Activated T-helper 1 cell treated with anti-CD3 and anti-CD28 coated beads, Interleukin-12 subunit alpha, Interleukin-12 subunit beta, Interleukin-2, Interleukin-4 antibody, amounts not matched to agents 30 ng/mL and 10 ng/mL and 1 ng/mL, durations not matched to agents 14 hours and 24 hours and 36 hours (primary cell): ENCODE measurements at regions of chr4 and their contacts with region 1.

Region 1: GRCh38 chr4:88823058-88823919 is 125.7 kb upstream of the NAP1L5 start:
- DNase-seq: peak; percentile 76
- H3K4me3 Mint-ChIP-seq: peak overlapping the region; percentile 95
- H3K27ac Mint-ChIP-seq: peak overlapping the region; percentile 99
- H3K4me1 Mint-ChIP-seq: peaks cover 48% of the 10 kb centered on the region
- H3K27me3 Mint-ChIP-seq: no peaks in the 10 kb centered on the region

Region 2: DNA sequence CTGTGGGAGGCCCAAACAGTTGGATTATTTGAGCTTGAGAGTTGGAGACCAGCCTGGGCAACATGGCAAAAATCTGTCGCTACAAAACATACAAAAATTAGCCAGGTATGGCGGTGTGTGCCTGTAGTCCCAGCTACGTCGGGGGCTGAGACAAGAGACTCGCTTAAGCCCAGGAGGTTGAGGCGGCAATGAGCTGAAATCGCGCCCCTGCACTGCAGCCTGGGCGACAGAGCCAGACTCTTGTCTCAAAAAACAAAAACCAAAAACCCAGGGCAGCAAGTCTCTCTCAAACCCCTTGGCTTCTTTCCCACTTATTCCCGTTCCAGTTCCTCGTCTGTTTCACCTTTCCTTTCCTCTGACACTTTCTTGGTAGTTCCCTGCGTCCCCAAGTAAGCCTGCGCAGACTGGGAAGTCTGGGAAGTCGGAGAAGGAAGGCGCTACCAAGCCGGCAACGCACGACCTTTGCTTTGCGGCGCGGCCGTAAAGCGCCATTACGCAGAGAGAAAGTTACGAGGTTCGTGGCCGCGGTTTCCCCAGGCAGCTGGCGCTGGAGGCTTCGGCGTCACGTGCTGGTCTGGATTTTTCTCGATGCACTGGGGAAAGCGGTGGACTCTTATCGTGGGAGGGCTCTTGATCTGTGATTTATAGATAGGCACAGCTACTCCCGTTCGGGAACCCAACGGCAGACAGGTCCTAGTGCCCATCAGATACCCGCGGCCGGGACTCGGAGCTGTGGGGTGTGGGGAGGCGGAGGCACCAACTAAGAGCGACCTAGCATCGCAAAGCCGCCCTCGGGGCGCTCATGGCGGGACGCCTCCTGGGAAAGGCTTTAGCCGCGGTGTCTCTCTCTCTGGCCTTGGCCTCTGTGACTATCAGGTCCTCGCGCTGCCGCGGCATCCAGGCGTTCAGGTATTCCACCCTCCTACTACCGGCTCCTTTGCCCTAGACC is 1400.9 kb before region 1 on chr4 and contains the start of gene NUDT9:
- intact Hi-C with region 1: loop called (anchors 5 kb)
- DNase-seq: peak; percentile 79
- H3K4me3 Mint-ChIP-seq: peak within 1 kb of the TSS; percentile 99
- H3K27ac Mint-ChIP-seq: peak within 1 kb of the TSS; percentile 95
- H3K4me1 Mint-ChIP-seq: peaks cover 30% of the 10 kb centered on the region
- H3K27me3 Mint-ChIP-seq: peaks cover 5% of the 10 kb centered on the region
- total RNA-seq, gene NUDT9: 13.9 and 14.6 TPM in 2 replicates

Region 3: DNA sequence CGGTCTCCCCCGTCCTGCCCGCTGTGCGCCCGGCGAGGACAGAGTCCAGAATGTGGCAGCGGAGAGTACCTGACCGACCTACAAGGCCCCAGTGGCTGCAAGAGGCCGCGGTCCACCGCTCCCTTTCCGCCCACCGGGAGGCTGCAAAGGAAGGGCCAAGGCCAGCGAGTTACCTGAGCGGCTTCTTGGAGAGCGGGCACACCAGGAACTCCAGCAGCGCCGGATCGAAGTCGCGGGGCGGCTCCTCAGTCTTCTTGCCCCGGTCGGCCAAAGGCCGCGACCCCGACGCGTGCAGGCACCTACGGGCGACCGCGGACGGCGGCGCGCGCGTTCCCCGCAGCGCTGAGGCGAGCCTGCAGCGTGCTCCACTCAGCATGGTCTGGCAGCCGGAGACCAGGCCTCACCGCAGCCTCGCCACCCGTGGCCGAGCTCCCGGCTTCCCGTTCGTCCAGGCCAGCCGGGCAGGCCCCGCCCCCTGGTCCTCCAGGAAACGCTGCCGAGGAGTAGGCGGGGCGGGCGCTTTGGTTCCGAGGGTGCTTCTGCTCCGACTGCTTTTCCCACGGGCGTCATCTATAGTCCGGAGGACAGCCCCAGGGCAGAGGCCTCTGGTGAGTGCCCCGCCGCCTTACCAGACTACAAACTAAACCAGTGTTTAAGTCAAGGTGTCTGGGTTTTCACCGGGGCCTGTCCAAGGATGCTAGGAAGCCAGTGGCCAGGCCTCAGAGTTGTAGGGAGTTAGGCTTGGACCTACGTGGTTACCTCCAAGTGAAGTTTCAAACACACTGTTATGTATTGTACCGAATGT is 299.8 kb before region 1 on chr4 and contains the start of gene PYURF:
- intact Hi-C with region 1: loop called (anchors 2 kb)
- DNase-seq: peak; percentile 79
- H3K4me3 Mint-ChIP-seq: peak within 1 kb of the TSS; percentile 99
- H3K27ac Mint-ChIP-seq: peak within 1 kb of the TSS; percentile 97
- H3K4me1 Mint-ChIP-seq: peaks cover 60% of the 10 kb centered on the region
- H3K27me3 Mint-ChIP-seq: peaks cover 2% of the 10 kb centered on the region
- total RNA-seq, gene PYURF: 55.9 and 61.5 TPM in 2 replicates

Region 4: GRCh38 chr4:88697588-88698329 is 125.5 kb before region 1 on chr4 and contains the start of gene NAP1L5:
- intact Hi-C with region 1: loop called (anchors 1 kb)
- DNase-seq: peak; percentile 61
- H3K4me3 Mint-ChIP-seq: peak within 1 kb of the TSS; percentile 88
- H3K27ac Mint-ChIP-seq: peak within 1 kb of the TSS; percentile 83
- H3K4me1 Mint-ChIP-seq: no peaks in the 10 kb centered on the region
- H3K27me3 Mint-ChIP-seq: peaks cover 2% of the 10 kb centered on the region
- total RNA-seq, gene NAP1L5: 5.5 and 6.1 TPM in 2 replicates

Region 5: GRCh38 chr4:88812420-88812819 is 10.9 kb before region 1 on chr4:
- intact Hi-C with region 1: no loop called
- DNase-seq: no peak
- H3K4me3 Mint-ChIP-seq: no peak overlapping the region
- H3K27ac Mint-ChIP-seq: no peak overlapping the region
- H3K4me1 Mint-ChIP-seq: peaks cover under 1% of the 10 kb centered on the region
- H3K27me3 Mint-ChIP-seq: peaks cover 21% of the 10 kb centered on the region

Region 6: GRCh38 chr4:88964450-88964849 is 141.2 kb after region 1 on chr4:
- intact Hi-C with region 1: loop called (anchors 5 kb)
- DNase-seq: no peak
- H3K4me3 Mint-ChIP-seq: no peak overlapping the region
- H3K27ac Mint-ChIP-seq: no peak overlapping the region
- H3K4me1 Mint-ChIP-seq: peaks cover 18% of the 10 kb centered on the region
- H3K27me3 Mint-ChIP-seq: peaks cover 9% of the 10 kb centered on the region

Region 7: DNA sequence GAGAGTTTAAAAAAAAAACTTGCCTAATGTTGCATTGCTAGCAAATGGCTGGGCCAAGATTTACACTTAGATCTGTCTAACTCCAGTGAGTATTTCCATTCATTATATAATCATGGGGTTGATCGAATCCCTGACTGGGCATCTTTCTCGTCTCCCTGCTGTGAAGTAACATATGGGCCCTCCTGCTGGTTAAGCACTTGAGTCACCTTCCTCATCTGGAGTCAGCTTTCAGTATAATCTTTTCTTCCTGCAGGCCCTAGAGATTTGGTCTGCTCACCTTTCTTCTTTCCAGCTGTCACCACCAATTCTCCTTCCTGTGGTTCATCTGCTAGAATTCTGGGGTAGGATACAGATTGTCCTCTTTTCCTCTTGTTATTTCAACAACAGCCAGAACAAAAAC is 329.7 kb after region 1 on chr4:
- intact Hi-C with region 1: no loop called
- DNase-seq: no peak
- H3K4me3 Mint-ChIP-seq: no peak overlapping the region
- H3K27ac Mint-ChIP-seq: no peak overlapping the region
- H3K4me1 Mint-ChIP-seq: no peaks in the 10 kb centered on the region
- H3K27me3 Mint-ChIP-seq: peaks cover 4% of the 10 kb centered on the region

Region 8: GRCh38 chr4:89307446-89308160 is 484.3 kb after region 1 on chr4 and contains the start of gene GPRIN3:
- intact Hi-C with region 1: loop called (anchors 5 kb)
- DNase-seq: peak; percentile 58
- H3K4me3 Mint-ChIP-seq: peak within 1 kb of the TSS; percentile 95
- H3K27ac Mint-ChIP-seq: peak within 1 kb of the TSS; percentile 97
- H3K4me1 Mint-ChIP-seq: peaks cover 72% of the 10 kb centered on the region
- H3K27me3 Mint-ChIP-seq: no peaks in the 10 kb centered on the region
- total RNA-seq, gene GPRIN3: 37.1 and 39.0 TPM in 2 replicates